ENCODE measurements at regions of chr11 and their contacts with region 1.

Region 1: GRCh38 chr11:10328314-10329090 is 23.6 kb downstream of the ADM start:
- DNase-seq: no peak
- ATAC-seq: peak; percentile 31
- H3K4me3 ChIP-seq: no peak overlapping the region
- H3K27ac ChIP-seq: peak overlapping the region; percentile 31; the same call in 1 of the 2 replicates
- H3K4me1 ChIP-seq: peaks cover 40% of the 10 kb centered on the region
- H3K27me3 ChIP-seq: no peaks in the 10 kb centered on the region
- CTCF ChIP-seq: no peak

Region 2: DNA sequence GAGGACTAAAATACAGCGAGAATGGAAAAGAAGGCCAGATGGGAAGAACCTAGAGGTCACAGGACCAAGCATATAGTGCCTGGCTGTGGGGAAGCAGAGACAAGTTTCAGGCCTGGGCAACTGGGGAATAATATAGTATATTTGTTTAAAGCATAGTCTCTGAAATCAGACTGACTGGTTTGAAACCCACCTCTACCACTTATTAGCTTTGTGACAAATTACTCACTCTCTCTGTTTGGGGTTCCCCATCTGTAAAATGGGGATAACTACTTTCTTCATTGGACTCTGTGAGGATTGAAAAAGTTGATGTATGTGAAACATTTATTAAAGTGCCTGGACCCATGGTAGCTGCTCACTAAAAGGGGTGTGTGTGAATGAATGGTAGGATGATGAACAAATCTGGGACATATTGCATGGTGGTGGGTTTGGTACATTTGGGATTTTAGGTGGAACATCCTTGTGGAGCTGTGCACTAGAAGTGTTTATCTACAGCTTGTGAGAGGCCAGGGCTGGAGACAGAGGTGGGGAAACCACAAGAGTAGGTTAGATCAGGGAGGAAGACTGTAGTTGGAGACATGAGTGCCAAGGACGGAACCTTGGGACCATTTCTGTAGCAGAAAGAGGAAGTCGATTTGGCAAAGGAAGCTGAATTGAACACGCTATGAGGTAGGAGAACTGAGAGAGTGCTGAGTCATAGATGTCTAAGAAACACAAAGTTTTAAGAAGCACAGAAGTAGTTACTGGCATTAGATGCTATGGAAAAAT is 612.0 kb before region 1 on chr11:
- CTCF ChIA-PET with region 1: no interaction called
- POLR2A ChIA-PET with region 1: no interaction called
- in situ Hi-C with region 1: no loop called
- intact Hi-C with region 1: no loop called
- DNase-seq: no peak
- ATAC-seq: peak; percentile 39; the same call in 1 of the 2 replicates
- H3K4me3 ChIP-seq: no peak overlapping the region
- H3K27ac ChIP-seq: peak overlapping the region; percentile 29; the same call in 1 of the 2 replicates
- H3K4me1 ChIP-seq: peaks cover 15% of the 10 kb centered on the region
- H3K27me3 ChIP-seq: no peaks in the 10 kb centered on the region
- CTCF ChIP-seq: no peak

Region 3: GRCh38 chr11:10108915-10109680 is 219.4 kb before region 1 on chr11:
- CTCF ChIA-PET with region 1: no interaction called
- POLR2A ChIA-PET with region 1: no interaction called
- in situ Hi-C with region 1: no loop called
- intact Hi-C with region 1: no loop called
- DNase-seq: no peak
- ATAC-seq: no peak
- H3K4me3 ChIP-seq: no peak overlapping the region
- H3K27ac ChIP-seq: peak overlapping the region; percentile 54; the same call in 1 of the 2 replicates
- H3K4me1 ChIP-seq: peaks cover 30% of the 10 kb centered on the region; the same call in 1 of the 2 replicates
- H3K27me3 ChIP-seq: no peaks in the 10 kb centered on the region
- CTCF ChIP-seq: no peak

Region 4: DNA sequence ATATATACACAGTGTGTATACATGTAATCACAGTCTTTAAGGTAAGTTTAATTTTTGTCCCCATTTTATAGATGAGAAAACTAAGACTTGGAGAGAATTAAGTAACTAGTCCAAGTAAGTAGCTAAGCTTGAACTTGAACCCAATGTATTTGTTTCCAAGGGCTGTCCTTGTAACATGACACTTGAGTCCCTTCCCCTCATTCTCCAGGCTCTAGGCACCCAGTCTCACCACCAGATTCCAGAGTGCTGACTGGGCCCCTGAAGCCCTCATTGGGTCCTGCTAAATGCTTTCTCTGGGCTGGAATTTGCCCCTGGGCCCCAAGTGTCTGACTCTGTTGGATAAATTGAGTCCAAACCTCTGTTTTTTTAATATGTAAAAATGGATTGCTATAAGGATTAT is 21.8 kb after region 1 on chr11:
- CTCF ChIA-PET with region 1: interaction called, 4 read pairs
- POLR2A ChIA-PET with region 1: interaction called, 11 read pairs
- in situ Hi-C with region 1: no loop called
- intact Hi-C with region 1: no loop called
- DNase-seq: no peak
- ATAC-seq: peak; percentile 54; the same call in 1 of the 2 replicates
- H3K4me3 ChIP-seq: no peak overlapping the region
- H3K27ac ChIP-seq: no peak overlapping the region; the same call in 1 of the 2 replicates
- H3K4me1 ChIP-seq: peaks cover 9% of the 10 kb centered on the region
- H3K27me3 ChIP-seq: no peaks in the 10 kb centered on the region
- CTCF ChIP-seq: no peak